ENCODE measurements at regions of chr10 and their contacts with region 1.

Region 1: DNA sequence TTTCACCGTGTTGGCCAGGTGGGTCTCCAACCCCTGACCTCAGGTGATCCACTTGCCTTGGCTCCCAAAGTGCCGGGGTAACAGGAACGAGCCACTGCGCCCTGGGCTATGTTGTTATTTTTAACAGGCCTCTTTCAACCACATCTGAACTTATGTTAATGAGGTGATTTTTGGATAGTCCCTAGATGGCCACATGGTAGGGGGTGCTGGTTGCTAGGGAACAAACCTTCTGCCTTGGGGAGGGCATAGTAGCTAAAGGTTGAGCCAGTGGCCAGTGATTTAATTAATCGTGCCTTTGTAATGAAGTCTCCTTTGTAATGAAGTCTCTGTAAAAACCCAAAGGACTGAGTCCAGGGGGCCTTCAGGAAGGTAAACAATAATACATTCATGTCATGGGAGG is 9.1 kb downstream of the COMTD1 start:
- DNase-seq: no peak
- H3K4me3 ChIP-seq: no peak overlapping the region
- CTCF ChIP-seq: no peak

Region 2: DNA sequence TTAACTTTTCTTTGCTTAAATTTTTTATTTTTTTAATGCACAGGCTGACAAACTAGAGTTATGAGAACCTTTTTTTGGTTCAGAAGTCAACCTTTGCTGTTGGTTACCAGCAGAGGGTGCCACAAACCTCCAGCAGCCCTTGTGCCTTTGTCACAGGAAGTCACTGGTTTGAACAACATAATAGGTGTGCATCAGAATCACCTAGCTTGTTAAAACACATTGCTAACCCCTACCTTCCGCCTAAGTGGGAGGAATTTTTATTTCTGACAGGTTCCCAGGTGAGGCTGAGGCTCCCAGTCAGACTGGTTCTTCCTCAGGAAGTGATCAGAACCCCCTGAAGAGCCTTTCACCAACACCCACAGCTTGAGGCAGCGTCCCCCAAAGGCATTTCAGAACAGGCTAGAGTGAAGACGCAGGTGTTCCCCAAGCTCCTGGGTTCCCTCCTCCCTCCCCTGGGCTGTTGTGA is 38.7 kb before region 1 on chr10:
- CTCF ChIA-PET with region 1: interaction called, 302 read pairs
- POLR2A ChIA-PET with region 1: no interaction called
- DNase-seq: no peak
- H3K4me3 ChIP-seq: no peak overlapping the region
- CTCF ChIP-seq: peak; percentile 68

Region 3: GRCh38 chr10:75210282-75211006 is 16.2 kb before region 1 on chr10 and contains the start of gene VDAC2:
- CTCF ChIA-PET with region 1: interaction called, 23 read pairs
- POLR2A ChIA-PET with region 1: interaction called, 24 read pairs
- DNase-seq: no peak
- H3K4me3 ChIP-seq: peak within 1 kb of the TSS; percentile 87
- CTCF ChIP-seq: no peak